ENCODE measurements at regions of chr4 and their contacts with region 1.

Region 1: DNA sequence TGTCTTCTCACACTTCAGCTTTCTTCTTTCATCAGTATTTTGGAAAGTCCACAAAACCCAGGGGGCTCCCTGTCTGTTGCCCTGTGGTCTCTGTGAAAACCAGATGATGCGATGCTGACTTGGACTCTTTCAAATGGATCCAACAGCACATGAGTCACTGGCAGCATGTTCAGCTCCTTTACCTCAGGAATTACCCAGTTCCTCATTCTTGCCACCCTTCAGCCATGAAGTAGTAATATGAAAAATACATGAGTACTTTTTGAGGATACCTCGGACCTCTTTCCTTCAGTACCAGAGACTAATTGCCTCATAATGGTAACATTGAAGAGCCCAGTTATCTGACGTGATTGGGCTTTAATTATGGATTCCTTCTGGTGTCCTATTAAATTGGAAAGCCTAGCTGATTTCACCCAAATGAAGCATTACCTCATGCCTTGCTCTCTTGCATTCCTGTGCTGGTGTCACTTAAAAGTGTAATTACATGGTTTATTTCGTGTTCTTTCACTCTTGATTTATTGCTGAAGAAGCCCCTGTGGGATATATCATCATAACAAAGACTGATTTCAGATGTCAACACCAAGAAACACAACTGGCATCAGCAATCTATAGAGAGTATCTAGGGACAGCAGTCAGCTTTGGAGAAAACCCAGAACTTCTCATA is 63.4 kb downstream of the NFKB1 start:
- DNase-seq: peak; percentile 51
- H3K4me3 Mint-ChIP-seq: no peak overlapping the region
- H3K27ac Mint-ChIP-seq: peak overlapping the region; percentile 40
- H3K4me1 Mint-ChIP-seq: peaks cover 82% of the 10 kb centered on the region
- H3K27me3 Mint-ChIP-seq: no peaks in the 10 kb centered on the region

Region 2: GRCh38 chr4:101604976-101605375 is 959.6 kb before region 1 on chr4:
- CTCF ChIA-PET with region 1: no interaction called
- POLR2A ChIA-PET with region 1: no interaction called
- intact Hi-C with region 1: no loop called
- DNase-seq: no peak
- H3K4me3 Mint-ChIP-seq: no peak overlapping the region
- H3K27ac Mint-ChIP-seq: no peak overlapping the region
- H3K4me1 Mint-ChIP-seq: no peaks in the 10 kb centered on the region
- H3K27me3 Mint-ChIP-seq: no peaks in the 10 kb centered on the region

Region 3: DNA sequence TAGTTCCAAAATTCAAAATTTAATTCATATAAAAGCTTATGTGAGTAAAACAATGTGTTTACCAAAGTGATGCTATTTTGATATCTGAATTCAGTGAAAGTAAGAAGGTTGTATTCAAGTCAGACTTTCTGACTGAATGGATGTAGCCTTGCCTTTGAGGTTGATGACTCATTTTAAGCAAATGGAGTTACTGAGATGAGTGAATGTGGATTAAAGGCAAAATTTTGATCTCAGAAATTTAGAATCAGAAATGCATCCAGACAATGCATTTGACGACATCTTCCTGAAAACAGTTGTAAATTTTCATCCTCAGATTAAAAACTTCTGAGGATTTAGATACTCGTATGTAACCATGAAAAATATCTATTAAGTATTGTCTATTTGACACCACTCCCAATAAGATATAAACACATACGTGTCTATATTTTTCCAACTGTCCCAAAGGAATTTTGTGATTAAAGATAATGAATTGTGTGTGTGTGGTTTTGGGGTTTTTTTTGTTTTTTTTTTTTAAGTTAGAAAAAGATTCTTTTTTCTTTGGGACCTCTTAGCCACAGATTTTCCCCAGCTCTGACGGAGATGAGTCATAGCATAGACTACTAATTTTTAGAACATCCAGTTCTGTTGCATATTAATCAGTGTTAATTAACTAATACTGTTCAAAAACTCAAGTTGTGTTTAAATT is 29.0 kb before region 1 on chr4:
- CTCF ChIA-PET with region 1: no interaction called
- POLR2A ChIA-PET with region 1: interaction called, 5 read pairs
- intact Hi-C with region 1: loop called (anchors 1 kb)
- DNase-seq: no peak
- H3K4me3 Mint-ChIP-seq: no peak overlapping the region
- H3K27ac Mint-ChIP-seq: no peak overlapping the region
- H3K4me1 Mint-ChIP-seq: peaks cover 53% of the 10 kb centered on the region
- H3K27me3 Mint-ChIP-seq: no peaks in the 10 kb centered on the region

Region 4: GRCh38 chr4:102580463-102580842 is 15.9 kb after region 1 on chr4:
- CTCF ChIA-PET with region 1: interaction called, 6 read pairs
- POLR2A ChIA-PET with region 1: interaction called, 10 read pairs
- intact Hi-C with region 1: loop called (anchors 2 kb)
- DNase-seq: no peak
- H3K4me3 Mint-ChIP-seq: no peak overlapping the region
- H3K27ac Mint-ChIP-seq: peak overlapping the region; percentile 53
- H3K4me1 Mint-ChIP-seq: peaks cover 68% of the 10 kb centered on the region
- H3K27me3 Mint-ChIP-seq: no peaks in the 10 kb centered on the region

Region 5: GRCh38 chr4:102598086-102598761 is 33.7 kb after region 1 on chr4:
- CTCF ChIA-PET with region 1: no interaction called
- POLR2A ChIA-PET with region 1: no interaction called
- intact Hi-C with region 1: loop called (anchors 2 kb)
- DNase-seq: no peak
- H3K4me3 Mint-ChIP-seq: peak overlapping the region; percentile 20
- H3K27ac Mint-ChIP-seq: peak overlapping the region; percentile 89
- H3K4me1 Mint-ChIP-seq: peaks cover 68% of the 10 kb centered on the region
- H3K27me3 Mint-ChIP-seq: no peaks in the 10 kb centered on the region